ENCODE measurements at regions of chr6 and their contacts with region 1.

Region 1: GRCh38 chr6:131199568-131200272 is 64.5 kb downstream of the AKAP7 start:
- DNase-seq: peak; percentile 95
- H3K4me3 ChIP-seq: peak overlapping the region; percentile 51
- H3K27ac ChIP-seq: peak overlapping the region; percentile 66
- H3K4me1 ChIP-seq: peaks cover 40% of the 10 kb centered on the region
- CTCF ChIP-seq: peak; percentile 95

Region 2: DNA sequence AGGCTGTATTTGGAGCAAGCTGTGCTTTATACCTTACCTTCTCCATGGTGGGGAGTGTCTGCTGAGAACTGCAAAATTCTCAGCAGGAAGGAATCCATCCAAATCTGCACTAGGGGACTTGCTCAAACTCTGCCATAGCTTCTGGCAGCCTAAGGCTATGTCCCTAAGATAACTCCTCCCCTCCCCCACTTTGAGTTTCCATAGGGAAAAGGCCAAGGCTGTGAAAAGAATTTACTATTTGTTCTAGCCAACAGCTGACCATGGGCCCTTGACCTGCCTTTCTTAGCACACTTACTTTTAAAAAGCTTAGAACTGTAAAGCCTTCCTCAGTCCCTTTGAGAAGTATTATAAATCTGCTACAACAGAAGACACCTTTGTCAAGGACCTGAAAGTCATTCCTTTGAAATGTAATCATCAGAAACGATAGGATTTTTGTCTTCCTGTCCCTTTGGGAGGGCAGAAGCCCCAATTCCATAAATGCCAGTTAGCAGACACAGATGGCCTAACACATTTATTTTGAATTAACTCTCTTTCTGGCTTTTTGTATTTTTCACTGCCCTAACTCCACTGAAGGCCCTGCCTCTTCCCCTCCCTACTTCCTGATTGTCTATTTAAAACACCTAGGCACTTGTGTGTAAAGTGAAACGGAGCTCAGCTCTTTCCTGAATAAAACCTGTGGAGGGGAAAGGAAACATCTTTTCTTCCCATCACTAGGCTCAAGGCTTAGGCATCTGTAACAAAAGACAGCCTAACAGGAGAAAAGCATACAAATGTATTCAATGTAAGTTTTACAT is 92.6 kb after region 1 on chr6:
- CTCF ChIA-PET with region 1: no interaction called
- POLR2A ChIA-PET with region 1: no interaction called
- intact Hi-C with region 1: no loop called
- DNase-seq: no peak
- H3K4me3 ChIP-seq: no peak overlapping the region
- H3K27ac ChIP-seq: no peak overlapping the region
- H3K4me1 ChIP-seq: peaks cover 9% of the 10 kb centered on the region
- CTCF ChIP-seq: no peak

Region 3: GRCh38 chr6:131368198-131368911 is 168.6 kb after region 1 on chr6:
- CTCF ChIA-PET with region 1: no interaction called
- POLR2A ChIA-PET with region 1: no interaction called
- intact Hi-C with region 1: loop called (anchors 2 kb)
- DNase-seq: peak; percentile 94
- H3K4me3 ChIP-seq: peak overlapping the region; percentile 45
- H3K27ac ChIP-seq: peak overlapping the region; percentile 97
- H3K4me1 ChIP-seq: peaks cover 73% of the 10 kb centered on the region
- CTCF ChIP-seq: peak; percentile 37; the same call in 1 of the 2 replicates

Region 4: DNA sequence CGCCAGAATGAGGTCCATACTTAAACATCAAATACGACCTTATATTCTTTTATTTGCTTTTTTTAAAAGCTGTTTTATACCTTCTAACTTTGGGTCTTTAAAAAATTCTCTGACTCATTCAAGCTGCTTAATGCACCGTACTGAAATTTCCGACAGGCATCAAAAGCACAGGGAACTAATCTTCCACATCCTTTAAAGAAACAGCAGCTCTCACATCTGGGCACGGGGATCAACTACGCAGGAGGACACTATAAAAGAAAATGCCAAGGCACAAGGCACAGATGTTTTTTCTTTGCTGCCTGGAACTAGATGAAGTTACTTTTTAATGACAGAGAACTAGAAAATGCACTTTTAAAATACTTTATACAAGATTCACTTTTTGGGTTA is 260.9 kb after region 1 on chr6:
- CTCF ChIA-PET with region 1: no interaction called
- POLR2A ChIA-PET with region 1: interaction called, 3 read pairs
- intact Hi-C with region 1: loop called (anchors 1 kb)
- DNase-seq: no peak
- H3K4me3 ChIP-seq: no peak overlapping the region
- H3K27ac ChIP-seq: no peak overlapping the region
- H3K4me1 ChIP-seq: peaks cover 21% of the 10 kb centered on the region
- CTCF ChIP-seq: no peak

Region 5: DNA sequence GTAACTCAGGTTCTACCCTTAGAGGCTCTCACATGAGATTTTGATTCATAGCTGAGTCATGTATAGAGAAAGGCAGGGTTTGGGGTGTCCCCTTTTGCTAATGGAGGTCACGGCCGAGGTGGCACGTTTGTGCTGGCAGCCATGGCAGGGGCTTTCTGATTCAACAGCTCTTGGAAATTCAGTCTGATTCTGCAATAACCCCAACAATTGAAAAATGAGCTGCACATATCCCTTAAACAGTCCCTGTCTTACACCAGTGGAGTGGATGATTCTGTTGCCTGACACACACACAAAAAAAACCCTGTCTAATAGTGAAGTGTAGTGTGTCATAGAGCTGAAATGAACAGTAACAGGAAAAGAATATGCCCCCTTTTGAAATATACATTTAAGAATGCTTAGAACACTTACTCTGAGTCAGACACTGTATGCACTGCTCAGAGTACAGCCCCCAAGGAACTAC is 332.9 kb after region 1 on chr6:
- CTCF ChIA-PET with region 1: interaction called, 16 read pairs
- POLR2A ChIA-PET with region 1: interaction called, 3 read pairs
- intact Hi-C with region 1: loop called (anchors 1 kb)
- DNase-seq: no peak
- H3K4me3 ChIP-seq: no peak overlapping the region
- H3K27ac ChIP-seq: no peak overlapping the region
- H3K4me1 ChIP-seq: peaks cover 12% of the 10 kb centered on the region
- CTCF ChIP-seq: no peak